Caco-2 (cell line): ENCODE measurements at regions of chr16 and their contacts with region 1.

Region 1: GRCh38 chr16:12340151-12340733 is 363.7 kb downstream of the SNX29 start:
- DNase-seq: peak; percentile 42 to 47
- H3K4me3 ChIP-seq: no peak overlapping the region
- H3K4me3 Mint-ChIP-seq: no peak overlapping the region
- H3K27ac Mint-ChIP-seq: no peak overlapping the region
- H3K4me1 ChIP-seq: no peaks in the 10 kb centered on the region
- H3K4me1 Mint-ChIP-seq: no peaks in the 10 kb centered on the region
- H3K27me3 ChIP-seq: no peaks in the 10 kb centered on the region; the same call in 1 of the 2 replicates
- H3K27me3 Mint-ChIP-seq: no peaks in the 10 kb centered on the region
- CTCF ChIP-seq: peak; percentile 34 to 56

Region 2: GRCh38 chr16:12323007-12323758 is 17.1 kb before region 1 on chr16:
- CTCF ChIA-PET with region 1: no interaction called
- POLR2A ChIA-PET with region 1: no interaction called
- intact Hi-C with region 1: no loop called
- DNase-seq: no peak
- H3K4me3 ChIP-seq: no peak overlapping the region
- H3K4me3 Mint-ChIP-seq: no peak overlapping the region
- H3K27ac Mint-ChIP-seq: no peak overlapping the region
- H3K4me1 ChIP-seq: peaks cover 4% of the 10 kb centered on the region
- H3K4me1 Mint-ChIP-seq: peaks cover 13% of the 10 kb centered on the region
- H3K27me3 ChIP-seq: no peaks in the 10 kb centered on the region
- H3K27me3 Mint-ChIP-seq: no peaks in the 10 kb centered on the region
- CTCF ChIP-seq: no peak

Region 3: DNA sequence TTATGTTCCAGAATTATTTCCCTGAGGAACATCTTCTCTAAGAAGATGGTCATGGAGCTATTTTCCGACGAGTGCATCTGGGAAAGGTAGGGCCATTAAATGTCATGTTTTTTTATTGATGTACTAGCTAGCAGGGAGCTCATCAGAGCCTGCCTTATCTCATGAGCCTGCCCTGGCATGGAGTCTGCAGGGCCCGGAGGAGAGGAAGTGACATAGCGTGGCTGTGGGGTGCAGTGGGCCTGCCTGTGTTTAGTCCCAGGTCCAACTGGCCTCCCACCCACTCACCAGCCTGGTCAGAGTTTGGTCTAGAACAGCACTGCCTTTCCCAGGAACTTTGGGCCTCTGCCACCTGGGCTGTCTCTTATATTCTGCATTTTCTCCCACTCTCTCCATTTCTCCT is 26.1 kb after region 1 on chr16:
- CTCF ChIA-PET with region 1: no interaction called
- POLR2A ChIA-PET with region 1: no interaction called
- intact Hi-C with region 1: no loop called
- DNase-seq: no peak
- H3K4me3 ChIP-seq: no peak overlapping the region
- H3K4me3 Mint-ChIP-seq: no peak overlapping the region
- H3K27ac Mint-ChIP-seq: no peak overlapping the region
- H3K4me1 ChIP-seq: no peaks in the 10 kb centered on the region
- H3K4me1 Mint-ChIP-seq: no peaks in the 10 kb centered on the region
- H3K27me3 ChIP-seq: no peaks in the 10 kb centered on the region
- H3K27me3 Mint-ChIP-seq: no peaks in the 10 kb centered on the region
- CTCF ChIP-seq: no peak

Region 4: DNA sequence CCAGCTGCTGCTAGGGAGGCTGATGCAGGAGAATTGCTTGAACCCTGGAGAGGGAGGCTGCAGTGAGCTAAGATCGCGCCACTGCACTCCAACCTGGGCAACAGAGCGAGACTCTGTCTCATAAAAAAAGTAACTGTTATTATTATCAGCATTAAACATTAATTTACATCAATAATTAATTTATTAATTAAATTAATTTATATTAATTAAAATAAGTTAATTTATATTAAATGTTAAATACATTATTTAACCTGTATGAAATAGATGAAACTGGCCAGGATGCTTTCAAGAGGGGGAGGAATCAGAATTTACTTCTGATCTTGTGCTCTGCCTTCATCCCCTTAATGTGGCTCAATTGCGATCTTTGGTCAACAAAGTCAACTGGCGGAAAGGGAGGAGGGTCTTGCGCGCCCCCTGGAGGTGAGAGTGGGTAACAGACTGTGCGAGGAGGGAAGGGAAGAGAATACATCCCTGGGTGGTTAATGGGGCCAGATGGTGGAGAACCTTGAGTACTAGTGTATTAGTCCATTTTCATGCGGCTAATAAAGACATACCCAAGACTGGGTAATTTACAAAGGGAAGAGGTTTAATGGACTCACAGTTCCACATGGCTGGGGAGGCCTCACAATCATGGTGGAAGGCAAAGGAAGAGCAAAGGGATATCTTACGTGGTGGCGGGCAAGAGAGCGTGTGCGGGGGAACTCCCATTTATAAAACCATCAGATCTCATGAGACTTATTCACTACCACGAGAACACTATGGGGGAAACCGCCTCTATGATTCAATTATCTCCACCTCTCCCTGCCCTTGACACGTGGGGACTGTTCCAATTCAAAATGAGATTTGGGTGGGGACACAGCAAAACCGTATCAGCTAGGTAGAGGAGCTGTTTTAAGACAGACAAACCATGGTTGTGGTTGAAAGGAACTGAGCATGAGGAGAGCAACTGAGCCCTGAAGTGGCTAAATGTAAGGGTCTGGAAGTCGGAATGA is 479.2 kb after region 1 on chr16:
- CTCF ChIA-PET with region 1: no interaction called
- POLR2A ChIA-PET with region 1: no interaction called
- intact Hi-C with region 1: loop called (anchors 5 kb)
- DNase-seq: peak; percentile 64 to 75
- H3K4me3 ChIP-seq: no peak overlapping the region
- H3K4me3 Mint-ChIP-seq: no peak overlapping the region
- H3K27ac Mint-ChIP-seq: no peak overlapping the region
- H3K4me1 ChIP-seq: no peaks in the 10 kb centered on the region
- H3K4me1 Mint-ChIP-seq: no peaks in the 10 kb centered on the region
- H3K27me3 ChIP-seq: no peaks in the 10 kb centered on the region
- H3K27me3 Mint-ChIP-seq: peaks cover 4% of the 10 kb centered on the region
- CTCF ChIP-seq: peak; percentile 63 to 65